Panc1 (cell line): ENCODE measurements at regions of chr17 and their contacts with region 1.

Region 1: DNA sequence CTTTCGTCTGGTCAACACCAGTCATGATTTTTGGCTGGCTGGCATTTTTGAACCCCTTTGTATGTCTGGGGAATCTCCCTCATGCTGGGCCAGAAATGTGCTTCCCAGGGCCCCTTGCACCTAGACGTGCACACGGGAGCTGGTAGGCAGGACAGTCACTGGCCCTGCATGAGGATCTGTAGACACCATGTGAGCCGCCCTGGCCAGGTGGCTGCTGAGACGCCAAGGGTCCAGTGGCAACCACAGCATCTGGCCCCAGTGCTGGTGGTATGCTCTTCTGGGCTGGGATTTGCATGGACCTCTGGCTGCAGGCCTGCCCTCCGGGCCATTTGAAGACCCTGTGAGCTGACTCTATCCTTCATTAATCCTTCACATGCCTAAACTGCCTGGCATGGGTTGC is 67.5 kb downstream of the NT5M start:
- DNase-seq: no peak
- ATAC-seq: no peak
- H3K4me3 ChIP-seq: no peak overlapping the region
- H3K27ac ChIP-seq: no peak overlapping the region
- H3K4me1 ChIP-seq: no peaks in the 10 kb centered on the region
- H3K27me3 ChIP-seq: no peaks in the 10 kb centered on the region
- CTCF ChIP-seq: no peak

Region 2: GRCh38 chr17:17494870-17495535 is 124.3 kb after region 1 on chr17:
- CTCF ChIA-PET with region 1: no interaction called
- POLR2A ChIA-PET with region 1: no interaction called
- in situ Hi-C with region 1: no loop called
- intact Hi-C with region 1: no loop called
- DNase-seq: no peak
- ATAC-seq: peak; percentile 31
- H3K4me3 ChIP-seq: peak overlapping the region; percentile 54 to 57
- H3K27ac ChIP-seq: no peak overlapping the region
- H3K4me1 ChIP-seq: peaks cover 3% of the 10 kb centered on the region
- H3K27me3 ChIP-seq: no peaks in the 10 kb centered on the region
- CTCF ChIP-seq: no peak; the same call in 1 of the 2 replicates

Region 3: GRCh38 chr17:17511881-17512858 is 141.5 kb after region 1 on chr17:
- CTCF ChIA-PET with region 1: no interaction called
- POLR2A ChIA-PET with region 1: interaction called, 10 read pairs
- in situ Hi-C with region 1: no loop called
- intact Hi-C with region 1: no loop called
- DNase-seq: no peak
- ATAC-seq: peak; percentile 88
- H3K4me3 ChIP-seq: no peak overlapping the region
- H3K27ac ChIP-seq: no peak overlapping the region
- H3K4me1 ChIP-seq: peaks cover 8% of the 10 kb centered on the region
- H3K27me3 ChIP-seq: no peaks in the 10 kb centered on the region
- CTCF ChIP-seq: no peak